Activated CD8-positive, alpha-beta T cell treated with anti-CD3 and anti-CD28 coated beads for 36 hours (primary cell): ENCODE measurements at regions of chr12 and their contacts with region 1.

Region 1: GRCh38 chr12:113196996-113197395 is 11.5 kb downstream of the RITA1 start:
- DNase-seq: peak; percentile 81
- ATAC-seq: peak; percentile 100
- H3K4me3 Mint-ChIP-seq: no peak overlapping the region
- H3K27ac Mint-ChIP-seq: no peak overlapping the region
- H3K4me1 Mint-ChIP-seq: no peaks in the 10 kb centered on the region
- H3K27me3 Mint-ChIP-seq: no peaks in the 10 kb centered on the region
- CTCF ChIP-seq: peak; percentile 68

Region 2: GRCh38 chr12:113184900-113185773 is 11.9 kb before region 1 on chr12 and contains the starts of genes DDX54 and RITA1:
- CTCF ChIA-PET with region 1: interaction called, 15 read pairs
- POLR2A ChIA-PET with region 1: interaction called, 17 read pairs
- intact Hi-C with region 1: no loop called
- DNase-seq: peak; percentile 93
- ATAC-seq: peak; percentile 86
- H3K4me3 Mint-ChIP-seq: peak within 1 kb of the TSS; percentile 97
- H3K27ac Mint-ChIP-seq: peak within 1 kb of the TSS; percentile 97
- H3K4me1 Mint-ChIP-seq: peaks cover 36% of the 10 kb centered on the region
- H3K27me3 Mint-ChIP-seq: no peaks in the 10 kb centered on the region
- CTCF ChIP-seq: no peak
- total RNA-seq, gene DDX54: 112 to 133 TPM
- total RNA-seq, gene RITA1: 18.5 to 19.1 TPM

Region 3: DNA sequence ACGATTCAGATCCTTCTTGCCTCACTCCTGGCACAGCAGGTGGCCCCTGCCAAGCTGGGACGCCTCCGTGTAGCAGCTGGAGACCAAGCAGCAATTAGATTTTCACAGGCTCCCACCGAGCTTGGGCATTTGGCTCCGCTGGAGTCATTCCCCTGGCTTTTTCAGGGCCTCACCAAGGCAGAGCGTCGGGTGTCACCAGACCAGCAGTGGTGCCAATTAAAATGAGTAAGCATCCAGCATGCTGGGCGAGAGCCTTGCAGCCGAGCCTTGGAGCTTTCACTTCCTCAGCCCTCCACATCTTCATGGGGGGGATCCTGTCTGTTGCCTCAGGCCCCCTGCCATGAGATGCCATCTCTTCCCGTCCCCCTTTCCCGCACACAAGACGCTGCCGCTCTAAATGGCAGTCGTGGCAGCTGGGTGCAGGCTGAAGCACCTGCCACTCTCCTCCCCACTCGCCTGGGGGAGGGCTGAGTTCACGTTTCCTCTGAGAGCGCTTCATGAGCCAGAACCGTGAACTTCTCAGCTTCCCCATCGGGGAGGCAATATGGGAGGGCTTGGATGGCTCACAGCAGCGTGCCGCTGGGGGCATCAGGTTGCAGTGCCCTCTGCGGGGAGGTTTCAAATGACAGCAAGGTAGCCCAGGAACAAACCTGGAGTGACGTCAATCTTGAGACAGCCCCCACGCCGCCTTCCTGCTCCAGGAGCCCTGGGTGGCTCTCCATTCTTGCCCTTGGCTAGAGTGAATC is 36.0 kb after region 1 on chr12:
- CTCF ChIA-PET with region 1: interaction called, 5 read pairs
- POLR2A ChIA-PET with region 1: interaction called, 4 read pairs
- intact Hi-C with region 1: loop called (anchors 5 kb)
- DNase-seq: peak; percentile 83
- ATAC-seq: peak; percentile 88
- H3K4me3 Mint-ChIP-seq: peak overlapping the region; percentile 59
- H3K27ac Mint-ChIP-seq: peak overlapping the region; percentile 80
- H3K4me1 Mint-ChIP-seq: peaks cover 44% of the 10 kb centered on the region
- H3K27me3 Mint-ChIP-seq: no peaks in the 10 kb centered on the region
- CTCF ChIP-seq: peak; percentile 33

Region 4: DNA sequence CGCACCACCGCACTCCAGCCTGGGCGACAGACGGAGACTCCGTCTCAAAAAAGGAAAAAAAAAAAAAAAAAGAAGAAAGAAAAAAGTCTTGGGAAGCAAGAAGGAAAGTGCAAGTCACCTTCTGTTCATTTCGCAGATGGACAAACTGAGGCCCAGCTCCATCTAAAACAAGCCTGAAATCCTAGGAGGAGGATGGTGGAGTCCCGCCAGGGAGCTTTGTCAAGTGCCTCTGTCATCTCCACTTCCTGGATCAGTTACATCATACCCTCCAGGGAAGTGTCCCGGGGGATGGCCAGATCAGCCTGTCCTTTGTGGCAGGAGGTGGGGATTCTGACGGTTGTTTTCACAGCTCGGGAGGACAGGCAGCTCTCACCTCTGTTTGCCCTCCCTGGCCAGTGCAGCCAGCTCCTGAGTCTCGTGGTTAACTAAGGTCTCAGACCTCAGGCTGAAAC is 216.5 kb after region 1 on chr12:
- CTCF ChIA-PET with region 1: no interaction called
- POLR2A ChIA-PET with region 1: no interaction called
- intact Hi-C with region 1: loop called (anchors 10 kb)
- DNase-seq: no peak
- ATAC-seq: no peak
- H3K4me3 Mint-ChIP-seq: no peak overlapping the region
- H3K27ac Mint-ChIP-seq: no peak overlapping the region
- H3K4me1 Mint-ChIP-seq: no peaks in the 10 kb centered on the region
- H3K27me3 Mint-ChIP-seq: peaks cover 9% of the 10 kb centered on the region
- CTCF ChIP-seq: no peak